ENCODE measurements at regions of chr5 and their contacts with region 1.

Region 1: DNA sequence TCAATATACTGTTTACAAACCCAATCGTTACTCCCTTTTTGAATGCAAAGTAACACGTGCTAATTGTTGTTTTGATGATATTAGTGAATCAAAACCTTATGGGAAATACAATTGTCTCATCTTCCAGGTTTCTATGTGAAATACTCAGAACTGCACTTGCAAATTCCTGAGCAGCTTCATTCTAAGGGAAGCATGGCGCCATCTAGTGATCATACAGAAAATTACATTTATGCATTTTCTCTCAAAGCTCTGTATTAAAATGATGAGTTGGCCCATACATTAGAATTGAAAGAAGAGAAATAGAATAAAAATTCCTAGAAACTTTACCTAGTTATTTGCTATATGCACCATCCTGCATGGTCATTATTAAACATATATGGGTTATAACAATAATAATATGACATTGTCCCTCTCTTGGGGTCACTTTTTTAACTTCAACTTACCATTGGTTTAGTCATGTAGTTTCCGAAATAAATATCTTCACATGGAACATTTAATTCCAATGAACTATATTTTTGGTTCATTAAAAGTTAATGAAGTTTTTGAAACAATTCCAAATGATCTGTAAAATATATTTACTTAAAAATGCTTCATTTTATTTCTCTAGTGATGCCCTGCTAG is 220.0 kb downstream of the PDE4D start:
- DNase-seq: peak; percentile 70
- ATAC-seq: no peak
- H3K4me3 ChIP-seq: no peak overlapping the region
- H3K4me3 Mint-ChIP-seq: no peak overlapping the region
- H3K27ac ChIP-seq: no peak overlapping the region
- H3K27ac Mint-ChIP-seq: no peak overlapping the region
- H3K4me1 ChIP-seq: peaks cover 0 to 4% of the 10 kb centered on the region in 2 donors
- H3K4me1 Mint-ChIP-seq: peaks cover 14% of the 10 kb centered on the region
- H3K27me3 ChIP-seq: no peaks in the 10 kb centered on the region
- H3K27me3 Mint-ChIP-seq: no peaks in the 10 kb centered on the region
- CTCF ChIP-seq: peak; percentile 95

Region 2: GRCh38 chr5:59039296-59040023 is 634.1 kb before region 1 on chr5:
- CTCF ChIA-PET with region 1: no interaction called
- POLR2A ChIA-PET with region 1: no interaction called
- intact Hi-C with region 1: loop called (anchors 10 kb)
- DNase-seq: peak; percentile 68
- ATAC-seq: peak; percentile 75
- H3K4me3 ChIP-seq: peak overlapping the region; percentile 31 to 66 (median 53)
- H3K4me3 Mint-ChIP-seq: peak overlapping the region; percentile 96
- H3K27ac ChIP-seq: no peak overlapping the region
- H3K27ac Mint-ChIP-seq: peak overlapping the region; percentile 93
- H3K4me1 ChIP-seq: peaks cover 20% of the 10 kb centered on the region in 2 donors
- H3K4me1 Mint-ChIP-seq: peaks cover 30% of the 10 kb centered on the region
- H3K27me3 ChIP-seq: peaks cover 0 to 27% (median 13%) of the 10 kb centered on the region in 4 experiments
- H3K27me3 Mint-ChIP-seq: peaks cover 28% of the 10 kb centered on the region
- CTCF ChIP-seq: no peak

Region 3: DNA sequence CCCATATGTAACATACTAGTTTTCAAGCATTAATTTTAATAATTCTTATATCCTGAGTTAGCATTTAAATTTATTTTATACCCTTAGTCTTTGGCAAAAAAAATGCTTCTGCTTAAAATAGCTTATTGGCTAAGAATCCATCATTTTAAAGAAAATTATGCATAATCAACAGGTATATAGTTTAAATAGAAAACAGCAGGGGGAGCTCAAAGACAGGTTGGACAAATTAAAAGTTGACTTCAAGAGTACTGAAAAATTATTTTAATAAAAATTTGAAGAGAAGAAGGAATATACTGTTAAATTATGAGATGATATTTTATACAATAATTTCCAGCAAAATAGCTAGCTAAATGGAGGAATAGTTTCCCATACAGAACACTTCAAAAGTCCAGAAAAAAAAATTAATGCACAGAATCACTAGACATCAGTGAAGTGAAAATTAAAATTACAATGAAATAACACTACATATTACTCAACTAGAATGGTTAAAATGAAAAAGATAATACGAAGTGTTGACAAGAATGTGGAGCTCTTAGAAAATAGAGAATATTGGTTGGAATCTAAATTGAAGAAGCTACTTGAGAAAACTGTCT is 167.2 kb before region 1 on chr5:
- CTCF ChIA-PET with region 1: interaction called, 94 read pairs
- POLR2A ChIA-PET with region 1: no interaction called
- intact Hi-C with region 1: loop called (anchors 1 kb)
- DNase-seq: peak; percentile 57
- ATAC-seq: no peak
- H3K4me3 ChIP-seq: no peak overlapping the region
- H3K4me3 Mint-ChIP-seq: no peak overlapping the region
- H3K27ac ChIP-seq: no peak overlapping the region
- H3K27ac Mint-ChIP-seq: no peak overlapping the region
- H3K4me1 ChIP-seq: no peaks in the 10 kb centered on the region
- H3K4me1 Mint-ChIP-seq: no peaks in the 10 kb centered on the region
- H3K27me3 ChIP-seq: no peaks in the 10 kb centered on the region
- H3K27me3 Mint-ChIP-seq: no peaks in the 10 kb centered on the region
- CTCF ChIP-seq: peak; percentile 81

Region 4: GRCh38 chr5:59660737-59661136 is 12.8 kb before region 1 on chr5:
- CTCF ChIA-PET with region 1: interaction called, 19 read pairs
- POLR2A ChIA-PET with region 1: interaction called, 4 read pairs
- intact Hi-C with region 1: no loop called
- DNase-seq: peak; percentile 41
- ATAC-seq: peak; percentile 39
- H3K4me3 ChIP-seq: no peak overlapping the region
- H3K4me3 Mint-ChIP-seq: peak overlapping the region; percentile 15
- H3K27ac ChIP-seq: no peak overlapping the region
- H3K27ac Mint-ChIP-seq: no peak overlapping the region
- H3K4me1 ChIP-seq: peaks cover 24 to 36% of the 10 kb centered on the region in 2 donors
- H3K4me1 Mint-ChIP-seq: peaks cover 54% of the 10 kb centered on the region
- H3K27me3 ChIP-seq: no peaks in the 10 kb centered on the region
- H3K27me3 Mint-ChIP-seq: no peaks in the 10 kb centered on the region
- CTCF ChIP-seq: peak; percentile 35

Region 5: GRCh38 chr5:59790399-59791125 is 117.0 kb after region 1 on chr5:
- CTCF ChIA-PET with region 1: interaction called, 12 read pairs
- POLR2A ChIA-PET with region 1: no interaction called
- intact Hi-C with region 1: no loop called
- DNase-seq: peak; percentile 78
- ATAC-seq: peak; percentile 84
- H3K4me3 ChIP-seq: peak overlapping the region in 2 of 5 experiments; percentile 1 to 48
- H3K4me3 Mint-ChIP-seq: peak overlapping the region; percentile 77
- H3K27ac ChIP-seq: peak overlapping the region; percentile 62 to 83
- H3K27ac Mint-ChIP-seq: peak overlapping the region; percentile 92
- H3K4me1 ChIP-seq: peaks cover 34% of the 10 kb centered on the region in 2 donors
- H3K4me1 Mint-ChIP-seq: peaks cover 60% of the 10 kb centered on the region
- H3K27me3 ChIP-seq: no peaks in the 10 kb centered on the region
- H3K27me3 Mint-ChIP-seq: no peaks in the 10 kb centered on the region
- CTCF ChIP-seq: no peak

Region 6: GRCh38 chr5:61449804-61450492 is 1776.4 kb after region 1 on chr5:
- CTCF ChIA-PET with region 1: no interaction called
- POLR2A ChIA-PET with region 1: no interaction called
- intact Hi-C with region 1: no loop called
- DNase-seq: no peak
- ATAC-seq: no peak
- H3K4me3 ChIP-seq: no peak overlapping the region
- H3K4me3 Mint-ChIP-seq: no peak overlapping the region
- H3K27ac ChIP-seq: no peak overlapping the region
- H3K27ac Mint-ChIP-seq: no peak overlapping the region
- H3K4me1 ChIP-seq: no peaks in the 10 kb centered on the region
- H3K4me1 Mint-ChIP-seq: peaks cover 10% of the 10 kb centered on the region
- H3K27me3 ChIP-seq: no peaks in the 10 kb centered on the region
- H3K27me3 Mint-ChIP-seq: no peaks in the 10 kb centered on the region
- CTCF ChIP-seq: no peak

Measured in B cell (primary cell).